H1 (cell line): ENCODE measurements at regions of chr3 and their contacts with region 1.

Region 1: GRCh38 chr3:137692803-137693431 is 71.2 kb upstream of the SOX14 start:
- DNase-seq: peak; percentile 57 to 75
- H3K4me3 ChIP-seq: no peak overlapping the region
- H3K27ac ChIP-seq: no peak overlapping the region
- H3K4me1 ChIP-seq: peaks cover 0 to 10% (median 6%) of the 10 kb centered on the region in 4 experiments; a peak in 4 of 7 replicates
- H3K27me3 ChIP-seq: no peaks in the 10 kb centered on the region
- CTCF ChIP-seq: peak; percentile 95 to 98 (median 96)
- EP300 ChIP-seq: no peak
- POLR2A ChIP-seq: no peak
- RAD21 ChIP-seq: peak; percentile 98 to 100

Region 2: DNA sequence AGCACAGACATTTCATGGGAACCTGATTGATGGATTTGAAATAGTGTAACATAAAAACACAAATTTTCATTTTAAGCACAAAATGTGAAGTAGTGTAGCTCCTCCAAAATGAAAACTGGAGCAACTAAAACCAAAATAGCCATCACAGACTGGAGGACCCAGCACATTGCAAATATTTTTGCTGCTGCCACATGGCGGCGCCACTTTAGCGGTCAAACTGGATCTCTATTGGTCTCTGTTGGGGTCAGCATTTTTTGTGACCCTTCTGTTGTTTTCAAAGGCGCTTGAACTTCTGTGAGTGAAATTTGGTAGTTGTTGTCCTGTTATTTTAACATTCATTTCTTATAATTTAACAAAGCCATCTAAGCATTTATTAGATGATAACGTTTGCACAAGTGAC is 475.2 kb before region 1 on chr3:
- CTCF ChIA-PET with region 1: interaction called, 10 read pairs
- POLR2A ChIA-PET with region 1: no interaction called
- DNase-seq: peak; percentile 7 to 79
- H3K4me3 ChIP-seq: no peak overlapping the region
- H3K27ac ChIP-seq: no peak overlapping the region
- H3K4me1 ChIP-seq: no peaks in the 10 kb centered on the region
- H3K27me3 ChIP-seq: no peaks in the 10 kb centered on the region
- CTCF ChIP-seq: peak; percentile 71 to 91 (median 80)
- EP300 ChIP-seq: no peak
- POLR2A ChIP-seq: no peak
- RAD21 ChIP-seq: peak; percentile 80 to 87

Region 3: DNA sequence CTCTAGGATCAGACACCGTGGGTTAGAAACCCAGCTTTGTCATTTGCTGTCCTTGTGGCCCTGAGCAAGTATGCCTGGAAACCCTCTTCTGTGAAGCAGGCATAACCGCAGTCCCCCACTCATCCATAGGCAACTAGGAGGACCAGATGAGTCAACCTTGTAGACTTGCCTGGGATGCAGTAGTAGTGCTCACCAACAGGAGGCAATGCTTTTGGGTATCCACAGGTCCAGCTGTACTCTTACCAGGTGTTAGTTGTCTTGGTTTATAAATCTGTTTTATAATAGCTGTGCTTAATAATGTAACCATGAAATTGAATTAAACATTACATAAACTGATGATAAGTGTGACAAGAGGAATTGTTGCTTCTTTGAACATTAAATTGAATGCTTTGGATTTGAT is 345.8 kb before region 1 on chr3:
- CTCF ChIA-PET with region 1: interaction called, 14 read pairs
- POLR2A ChIA-PET with region 1: no interaction called
- DNase-seq: no peak
- H3K4me3 ChIP-seq: no peak overlapping the region
- H3K27ac ChIP-seq: no peak overlapping the region
- H3K4me1 ChIP-seq: no peaks in the 10 kb centered on the region
- H3K27me3 ChIP-seq: no peaks in the 10 kb centered on the region
- CTCF ChIP-seq: peak; percentile 41 to 83 (median 66)
- EP300 ChIP-seq: no peak
- POLR2A ChIP-seq: no peak
- RAD21 ChIP-seq: peak; percentile 37 to 64

Region 4: DNA sequence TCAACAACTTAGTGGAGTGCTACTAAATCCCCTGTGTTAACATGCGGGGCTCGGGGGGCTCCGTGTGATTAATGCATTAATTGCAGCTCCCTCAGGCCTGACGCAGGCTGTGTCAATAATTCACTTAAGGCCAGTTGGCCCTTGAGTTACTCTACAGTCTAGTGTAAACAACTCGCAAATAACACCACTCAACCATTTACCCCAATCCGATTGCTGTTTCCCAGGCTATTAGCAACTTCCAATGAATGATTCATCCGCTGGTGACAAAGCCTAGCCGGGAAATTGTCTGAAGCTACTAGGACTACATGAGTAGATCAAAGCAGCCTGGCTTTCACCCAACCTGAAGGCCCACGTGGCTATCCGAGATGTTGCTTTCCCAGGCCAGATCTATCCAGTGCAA is 50.1 kb before region 1 on chr3:
- CTCF ChIA-PET with region 1: no interaction called
- POLR2A ChIA-PET with region 1: no interaction called
- DNase-seq: no peak
- H3K4me3 ChIP-seq: peak overlapping the region in 2 of 4 experiments; percentile 1 to 38; a peak in 3 of 8 replicates
- H3K27ac ChIP-seq: no peak overlapping the region
- H3K4me1 ChIP-seq: peaks cover 5 to 16% (median 12%) of the 10 kb centered on the region in 4 experiments
- H3K27me3 ChIP-seq: peaks cover 0 to 1% (median 0%) of the 10 kb centered on the region in 4 experiments; a peak in 2 of 7 replicates
- CTCF ChIP-seq: no peak
- EP300 ChIP-seq: no peak
- POLR2A ChIP-seq: no peak
- RAD21 ChIP-seq: no peak

Region 5: DNA sequence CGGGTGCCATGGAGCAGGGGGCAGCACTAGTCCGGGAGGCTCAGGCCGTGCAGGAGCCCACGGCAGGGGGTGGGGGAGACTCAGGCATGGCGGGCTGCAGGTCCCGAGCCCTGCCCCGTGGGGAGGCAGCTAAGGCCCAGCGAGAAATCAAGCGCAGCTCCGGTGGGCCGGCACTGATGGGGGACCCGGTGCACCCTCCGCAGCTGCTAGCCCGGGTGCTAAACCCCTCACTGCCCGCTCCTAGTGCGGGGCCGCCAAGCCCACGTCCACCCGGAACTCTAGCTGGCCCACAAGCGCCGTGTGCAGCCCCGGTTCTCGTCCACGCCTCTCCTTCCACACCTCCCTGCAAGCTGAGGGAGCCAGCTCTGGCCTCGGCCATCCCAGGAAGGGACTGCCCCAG is 21.6 kb after region 1 on chr3:
- CTCF ChIA-PET with region 1: interaction called, 15 read pairs
- POLR2A ChIA-PET with region 1: no interaction called
- DNase-seq: no peak
- H3K4me3 ChIP-seq: no peak overlapping the region
- H3K27ac ChIP-seq: no peak overlapping the region
- H3K4me1 ChIP-seq: no peaks in the 10 kb centered on the region
- H3K27me3 ChIP-seq: no peaks in the 10 kb centered on the region
- CTCF ChIP-seq: no peak
- EP300 ChIP-seq: no peak
- POLR2A ChIP-seq: no peak
- RAD21 ChIP-seq: no peak

Region 6: GRCh38 chr3:137835096-137835495 is 142.2 kb after region 1 on chr3:
- CTCF ChIA-PET with region 1: no interaction called
- POLR2A ChIA-PET with region 1: no interaction called
- DNase-seq: no peak
- H3K4me3 ChIP-seq: no peak overlapping the region
- H3K27ac ChIP-seq: no peak overlapping the region
- H3K4me1 ChIP-seq: no peaks in the 10 kb centered on the region
- H3K27me3 ChIP-seq: no peaks in the 10 kb centered on the region
- CTCF ChIP-seq: no peak
- EP300 ChIP-seq: no peak
- POLR2A ChIP-seq: no peak
- RAD21 ChIP-seq: no peak

Region 7: DNA sequence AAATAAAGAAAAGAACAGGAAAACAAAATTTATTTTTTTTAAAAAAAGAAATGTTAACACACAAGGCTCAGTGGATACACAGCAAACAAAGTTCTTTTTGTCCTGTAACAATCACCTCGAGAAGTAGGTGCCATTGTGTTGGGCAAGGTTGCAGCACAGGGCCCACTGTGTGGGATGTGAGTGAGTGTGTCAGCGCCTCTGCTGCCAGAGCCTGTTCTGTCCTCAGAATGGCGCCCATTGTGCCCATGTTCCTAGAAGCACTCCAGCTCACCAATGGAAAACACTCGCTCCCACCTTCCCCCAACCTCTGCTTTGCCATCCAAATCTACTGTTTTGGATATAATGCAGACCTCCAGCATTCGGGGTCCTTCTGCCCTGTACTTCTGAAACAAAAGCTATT is 232.2 kb after region 1 on chr3:
- CTCF ChIA-PET with region 1: no interaction called
- POLR2A ChIA-PET with region 1: no interaction called
- DNase-seq: no peak
- H3K4me3 ChIP-seq: no peak overlapping the region
- H3K27ac ChIP-seq: no peak overlapping the region
- H3K4me1 ChIP-seq: no peaks in the 10 kb centered on the region
- H3K27me3 ChIP-seq: no peaks in the 10 kb centered on the region
- CTCF ChIP-seq: no peak
- EP300 ChIP-seq: no peak
- POLR2A ChIP-seq: no peak
- RAD21 ChIP-seq: no peak

Region 8: DNA sequence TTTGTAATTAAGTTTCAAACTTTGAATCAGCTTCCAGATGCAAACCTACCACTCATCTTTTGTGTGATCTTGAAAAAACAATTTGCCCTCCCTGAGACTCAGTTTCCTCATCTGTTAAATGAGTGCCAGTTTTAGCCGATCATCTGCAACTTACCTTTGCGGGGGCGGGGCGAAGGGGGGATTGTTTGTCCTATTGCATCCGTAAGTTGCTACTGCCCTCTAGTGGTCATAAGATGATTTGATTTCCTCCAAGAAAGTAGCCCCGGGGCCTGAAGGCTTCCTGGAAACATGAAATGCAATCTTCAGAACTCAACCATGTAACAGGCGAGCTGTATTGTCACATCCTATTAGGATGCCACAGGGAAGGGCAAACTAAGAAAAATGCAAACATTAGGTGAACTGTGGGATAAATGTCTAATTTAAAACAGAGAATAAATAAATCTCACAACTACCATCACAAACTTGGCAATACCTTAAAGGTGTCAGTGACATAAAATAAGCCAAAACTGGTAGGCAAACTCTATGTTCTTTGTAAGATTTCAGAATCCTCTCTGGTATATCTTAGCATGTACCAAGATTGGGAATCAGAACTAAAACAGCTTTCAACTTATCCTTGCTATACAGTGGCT is 253.5 kb after region 1 on chr3:
- CTCF ChIA-PET with region 1: interaction called, 33 read pairs
- POLR2A ChIA-PET with region 1: no interaction called
- DNase-seq: peak; percentile 41 to 67
- H3K4me3 ChIP-seq: no peak overlapping the region
- H3K27ac ChIP-seq: no peak overlapping the region
- H3K4me1 ChIP-seq: peaks cover 0 to 10% (median 0%) of the 10 kb centered on the region in 4 experiments; a peak in 1 of 7 replicates
- H3K27me3 ChIP-seq: peaks cover 0 to 5% (median under 1%) of the 10 kb centered on the region in 4 experiments; a peak in 4 of 7 replicates
- CTCF ChIP-seq: peak; percentile 31 to 79 (median 73)
- EP300 ChIP-seq: no peak
- POLR2A ChIP-seq: no peak
- RAD21 ChIP-seq: peak; percentile 97 to 98